ENCODE measurements at regions of chr11 and their contacts with region 1.

Region 1: GRCh38 chr11:34492806-34493414 is 20.7 kb downstream of the ELF5 start:
- DNase-seq: peak; percentile 71 to 76
- H3K4me3 ChIP-seq: no peak overlapping the region
- H3K27ac ChIP-seq: no peak overlapping the region
- H3K4me1 ChIP-seq: peaks cover 9 to 20% of the 10 kb centered on the region in 2 donors
- H3K27me3 ChIP-seq: no peaks in the 10 kb centered on the region
- CTCF ChIP-seq: peak; percentile 23 to 72 (median 70)
- POLR2A ChIP-seq: no peak

Region 2: GRCh38 chr11:34366522-34366921 is 126.4 kb before region 1 on chr11:
- intact Hi-C with region 1: loop called (anchors 5 kb)
- DNase-seq: peak; percentile 13 to 24
- H3K4me3 ChIP-seq: no peak overlapping the region
- H3K27ac ChIP-seq: no peak overlapping the region
- H3K4me1 ChIP-seq: no peaks in the 10 kb centered on the region
- H3K27me3 ChIP-seq: no peaks in the 10 kb centered on the region
- CTCF ChIP-seq: peak in 2 of 6 experiments; percentile 28 to 38
- POLR2A ChIP-seq: no peak

Region 3: GRCh38 chr11:34594603-34595002 is 101.7 kb after region 1 on chr11:
- intact Hi-C with region 1: no loop called
- DNase-seq: no peak
- H3K4me3 ChIP-seq: no peak overlapping the region
- H3K27ac ChIP-seq: no peak overlapping the region
- H3K4me1 ChIP-seq: no peaks in the 10 kb centered on the region
- H3K27me3 ChIP-seq: no peaks in the 10 kb centered on the region
- CTCF ChIP-seq: no peak
- POLR2A ChIP-seq: no peak